Heart left ventricle (tissue), 16 donors: ENCODE measurements at regions of chr12 and their contacts with region 1.

Region 1: DNA sequence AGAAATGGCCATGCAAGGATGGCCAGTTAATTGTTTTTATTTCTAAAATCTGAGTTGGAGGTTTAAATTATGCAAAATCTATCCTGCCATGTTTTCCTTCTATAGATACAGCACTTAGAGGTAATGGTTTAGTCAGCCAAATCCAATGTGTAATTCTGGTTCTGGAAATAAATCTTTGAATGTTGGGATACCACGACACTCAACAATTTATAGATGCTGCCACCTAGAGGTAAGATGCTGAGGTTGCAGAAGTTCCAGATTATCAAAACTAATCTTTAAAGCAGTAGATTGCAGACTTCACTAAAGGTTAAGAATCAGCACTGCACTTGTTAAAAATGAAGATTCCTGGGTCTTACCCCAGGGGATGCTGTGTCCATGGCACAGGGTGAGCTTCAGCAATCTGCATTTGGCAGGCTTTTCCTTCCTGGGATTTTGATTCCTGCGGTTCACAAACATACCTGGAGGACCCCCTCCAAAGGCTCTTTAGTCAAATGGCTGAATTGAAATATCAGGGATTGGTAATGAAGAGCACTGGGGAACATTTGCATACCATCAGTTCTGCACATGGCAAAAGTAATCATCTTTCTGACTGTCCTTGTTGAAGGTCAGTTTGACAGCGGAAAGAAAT is 53.4 kb upstream of the ANO4 start:
- DNase-seq: no peak
- ATAC-seq: no peak
- H3K4me3 ChIP-seq: no peak overlapping the region
- H3K27ac ChIP-seq: no peak overlapping the region
- H3K4me1 ChIP-seq: no peaks in the 10 kb centered on the region
- H3K27me3 ChIP-seq: peaks cover 0 to 7% (median 0%) of the 10 kb centered on the region in 9 donors
- CTCF ChIP-seq: peak; percentile 20 to 81 (median 60)
- POLR2A ChIP-seq: no peak

Region 2: DNA sequence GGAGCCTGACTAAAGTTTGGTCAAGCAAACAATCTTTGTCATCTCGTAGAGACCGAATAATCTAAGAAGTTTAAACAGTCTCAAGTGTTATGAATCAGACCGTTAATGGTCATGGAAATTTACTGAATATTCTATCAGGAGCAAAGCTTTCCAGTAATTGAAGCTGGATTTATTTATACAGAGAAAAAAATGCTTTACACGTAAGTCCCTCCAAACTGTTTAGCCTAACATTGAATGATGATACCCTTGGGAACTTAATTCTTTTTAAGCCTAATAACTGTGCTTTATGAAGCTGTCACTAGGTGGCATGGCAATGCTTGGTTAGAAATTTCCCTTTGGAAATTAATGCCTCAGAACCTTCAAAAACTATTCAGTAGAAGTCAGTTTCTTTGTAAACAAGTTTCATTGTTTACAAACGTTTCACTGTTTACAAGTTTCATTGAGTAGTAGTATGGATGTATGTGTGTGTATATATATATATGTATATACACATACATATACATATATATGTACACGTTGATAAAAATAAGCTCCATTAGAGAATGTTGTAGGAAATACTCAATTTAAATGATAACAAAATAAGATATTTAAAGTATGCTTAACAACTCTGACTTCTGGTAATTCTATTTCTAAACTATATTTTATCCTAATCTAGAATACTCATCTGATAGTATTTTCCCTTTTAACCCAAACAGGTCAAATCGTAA is 506.4 kb before region 1 on chr12:
- intact Hi-C with region 1: loop called in 9 of 10 experiments (anchors 2 to 10 kb)
- DNase-seq: no peak
- ATAC-seq: peak in 2 of 4 donors; percentile 48 to 76
- H3K4me3 ChIP-seq: peak overlapping the region in 1 of 12 donors; percentile 13
- H3K27ac ChIP-seq: peak overlapping the region in 4 of 12 donors; percentile 0 to 28 (median 15)
- H3K4me1 ChIP-seq: peaks cover 0 to 7% (median 0%) of the 10 kb centered on the region in 12 donors
- H3K27me3 ChIP-seq: no peaks in the 10 kb centered on the region
- CTCF ChIP-seq: peak; percentile 53 to 84 (median 72)
- POLR2A ChIP-seq: no peak

Region 3: GRCh38 chr12:100348657-100349454 is 392.3 kb before region 1 on chr12:
- intact Hi-C with region 1: loop called in 6 of 10 experiments (anchors 2 to 10 kb)
- DNase-seq: no peak
- ATAC-seq: no peak
- H3K4me3 ChIP-seq: no peak overlapping the region
- H3K27ac ChIP-seq: no peak overlapping the region
- H3K4me1 ChIP-seq: no peaks in the 10 kb centered on the region
- H3K27me3 ChIP-seq: no peaks in the 10 kb centered on the region
- CTCF ChIP-seq: peak in 11 of 12 donors; percentile 27 to 65 (median 47)
- POLR2A ChIP-seq: no peak

Region 4: DNA sequence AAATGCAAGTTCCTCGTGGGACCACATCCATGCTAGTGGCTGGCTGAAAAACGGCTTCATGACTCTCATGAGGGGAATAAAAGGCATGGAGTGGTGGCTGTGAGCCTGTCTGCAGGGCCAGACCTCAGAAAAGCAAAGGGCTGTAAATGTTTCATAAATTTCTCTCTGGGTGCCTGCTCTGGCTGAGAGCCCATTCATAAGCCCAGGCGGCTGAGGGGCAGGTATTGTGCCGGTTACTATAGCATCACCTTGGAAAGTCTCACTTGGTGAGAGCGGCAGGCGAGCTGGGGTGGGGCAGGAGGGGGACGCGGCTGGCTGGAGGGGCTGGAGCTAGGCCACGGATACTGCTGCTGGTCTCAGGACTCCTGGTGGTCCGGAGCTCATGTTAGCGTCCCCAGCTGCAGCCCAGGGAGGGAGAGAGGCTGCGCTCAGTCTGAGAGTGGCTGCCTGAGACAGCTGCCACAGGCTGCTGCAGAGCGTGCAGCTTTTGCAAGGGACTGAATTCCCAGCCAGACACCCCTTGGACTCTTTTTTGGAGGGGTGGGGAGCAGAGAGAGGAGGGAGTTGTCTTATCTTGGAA is 384.5 kb before region 1 on chr12 and contains the start of gene SLC17A8:
- intact Hi-C with region 1: loop called in 3 of 10 experiments (anchors 2 to 10 kb)
- DNase-seq: no peak
- ATAC-seq: no peak
- H3K4me3 ChIP-seq: no peak within 1 kb of the TSS
- H3K27ac ChIP-seq: no peak within 1 kb of the TSS
- H3K4me1 ChIP-seq: peaks cover 0 to 10% (median 2%) of the 10 kb centered on the region in 12 donors
- H3K27me3 ChIP-seq: peaks cover 0 to 20% (median 5%) of the 10 kb centered on the region in 9 donors
- CTCF ChIP-seq: no peak
- POLR2A ChIP-seq: no peak
- total RNA-seq, gene SLC17A8: 0.15 TPM in 1 of 9 donors, not detected in the others

Region 5: DNA sequence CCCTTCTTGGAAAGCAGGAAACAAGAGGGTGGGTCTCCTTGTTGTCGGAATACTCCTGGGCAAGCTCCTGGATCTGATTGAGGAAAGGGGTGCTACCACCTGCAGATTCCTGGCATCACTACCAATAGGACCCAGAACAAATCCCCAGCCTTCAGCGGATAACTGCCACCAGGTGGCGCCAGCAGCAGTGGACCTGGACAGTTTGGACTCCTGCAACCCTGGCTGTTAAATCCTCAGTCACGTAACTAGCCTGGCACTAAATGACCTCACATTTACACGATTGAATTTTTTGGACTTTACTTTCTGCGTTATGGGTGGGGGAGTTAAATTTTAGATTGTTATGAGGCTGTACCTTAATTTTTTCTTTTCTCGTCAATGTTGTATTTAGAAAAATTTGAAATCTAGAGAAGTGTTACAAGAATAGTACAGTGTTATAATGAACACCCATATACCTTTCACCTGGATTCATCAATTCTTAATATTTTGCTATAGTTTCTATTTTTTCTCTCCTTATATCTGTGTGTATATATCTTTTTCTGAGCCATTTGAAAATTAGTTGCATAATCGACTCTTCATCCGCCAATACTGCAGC is 72.2 kb before region 1 on chr12:
- intact Hi-C with region 1: loop called in 1 of 10 experiments (anchors 5 kb)
- DNase-seq: peak; percentile 33 to 78 (median 45)
- ATAC-seq: peak in 2 of 4 donors; percentile 42 to 59
- H3K4me3 ChIP-seq: no peak overlapping the region
- H3K27ac ChIP-seq: no peak overlapping the region
- H3K4me1 ChIP-seq: no peaks in the 10 kb centered on the region
- H3K27me3 ChIP-seq: peaks cover 0 to 7% (median 0%) of the 10 kb centered on the region in 9 donors
- CTCF ChIP-seq: peak; percentile 44 to 78 (median 64)
- POLR2A ChIP-seq: no peak

Region 6: DNA sequence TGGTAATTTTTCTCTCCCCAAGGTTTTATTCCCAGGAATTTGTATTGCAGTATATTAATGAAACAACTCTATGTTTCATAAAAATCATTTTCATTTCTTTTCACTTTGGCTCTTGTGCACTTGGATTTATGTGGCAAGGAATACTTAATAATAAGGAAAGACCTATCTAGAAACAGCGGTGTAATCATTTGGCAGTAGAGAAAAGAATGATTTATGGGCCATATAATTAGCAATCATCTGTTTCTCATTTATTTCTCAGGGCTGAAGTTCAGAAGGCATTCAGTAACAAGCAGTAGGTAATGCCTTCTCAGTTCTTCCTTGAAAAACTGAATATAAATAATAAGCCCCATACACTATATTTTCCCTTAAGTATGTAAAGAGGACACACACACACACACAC is 226.0 kb after region 1 on chr12:
- intact Hi-C with region 1: no loop called
- DNase-seq: no peak
- ATAC-seq: no peak
- H3K4me3 ChIP-seq: no peak overlapping the region
- H3K27ac ChIP-seq: no peak overlapping the region
- H3K4me1 ChIP-seq: no peaks in the 10 kb centered on the region
- H3K27me3 ChIP-seq: no peaks in the 10 kb centered on the region
- CTCF ChIP-seq: no peak
- POLR2A ChIP-seq: no peak